ENCODE measurements at regions of chr6 and their contacts with region 1.

Region 1: GRCh38 chr6:45377554-45378333 is at the start of gene SUPT3H:
- DNase-seq: peak; percentile 96
- total RNA-seq, gene SUPT3H: 6.2 TPM

Region 2: DNA sequence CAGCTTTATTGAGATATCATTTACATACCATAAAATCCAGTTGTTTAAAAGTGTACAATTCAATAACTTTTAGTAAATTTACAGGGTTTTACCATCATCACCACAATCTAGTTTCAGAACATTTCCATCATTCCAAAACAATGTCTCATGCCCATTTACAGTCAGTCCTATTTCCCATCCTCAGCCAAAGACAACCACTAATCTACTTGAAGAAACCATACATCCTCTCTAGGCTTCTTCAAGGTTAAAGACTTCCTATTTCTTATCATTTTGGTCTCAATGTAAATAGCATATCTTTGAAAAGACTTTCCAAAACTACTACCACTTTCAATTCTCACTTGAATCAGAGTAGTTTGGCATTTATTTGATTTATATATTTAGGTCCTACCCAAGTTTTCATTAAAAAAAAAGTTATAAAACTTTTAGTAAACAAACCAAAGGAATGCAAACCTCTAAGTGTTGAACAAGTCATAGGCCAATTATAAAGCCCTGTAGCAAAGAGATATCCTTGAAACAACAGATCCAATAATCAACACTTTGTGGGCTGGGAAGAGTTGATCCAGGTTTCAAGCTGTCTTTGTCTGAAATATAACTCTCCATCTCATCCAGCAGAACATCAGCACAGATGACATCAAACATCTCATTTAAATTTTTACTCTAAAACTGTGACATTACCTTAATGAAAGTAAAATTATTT is 260.9 kb before region 1 on chr6:
- intact Hi-C with region 1: loop called (anchors 5 kb)
- DNase-seq: no peak

Region 3: GRCh38 chr6:45922728-45923351 is 545.1 kb after region 1 on chr6:
- intact Hi-C with region 1: loop called (anchors 5 kb)
- DNase-seq: peak; percentile 84

Measured in cardiac septum (tissue), 1 donor.